Naive thymus-derived CD4-positive, alpha-beta T cell (primary cell): ENCODE measurements at regions of chr12 and their contacts with region 1.

Region 1: GRCh38 chr12:44812062-44812461 is 64.1 kb downstream of the NELL2 start:
- DNase-seq: peak in 7 of 9 donors; percentile 42 to 65 (median 60)
- ATAC-seq: peak; percentile 79
- H3K4me3 ChIP-seq: no peak overlapping the region
- H3K4me3 Mint-ChIP-seq: peak overlapping the region in 3 of 10 donors; percentile 14 to 38 (median 34)
- H3K27ac ChIP-seq: no peak overlapping the region
- H3K27ac Mint-ChIP-seq: peak overlapping the region in 6 of 9 donors; percentile 21 to 77 (median 41)
- H3K4me1 ChIP-seq: peaks cover 14 to 15% of the 10 kb centered on the region in 2 donors
- H3K4me1 Mint-ChIP-seq: peaks cover 8 to 50% (median 38%) of the 10 kb centered on the region in 7 donors
- H3K27me3 ChIP-seq: no peaks in the 10 kb centered on the region
- H3K27me3 Mint-ChIP-seq: no peaks in the 10 kb centered on the region

Region 2: DNA sequence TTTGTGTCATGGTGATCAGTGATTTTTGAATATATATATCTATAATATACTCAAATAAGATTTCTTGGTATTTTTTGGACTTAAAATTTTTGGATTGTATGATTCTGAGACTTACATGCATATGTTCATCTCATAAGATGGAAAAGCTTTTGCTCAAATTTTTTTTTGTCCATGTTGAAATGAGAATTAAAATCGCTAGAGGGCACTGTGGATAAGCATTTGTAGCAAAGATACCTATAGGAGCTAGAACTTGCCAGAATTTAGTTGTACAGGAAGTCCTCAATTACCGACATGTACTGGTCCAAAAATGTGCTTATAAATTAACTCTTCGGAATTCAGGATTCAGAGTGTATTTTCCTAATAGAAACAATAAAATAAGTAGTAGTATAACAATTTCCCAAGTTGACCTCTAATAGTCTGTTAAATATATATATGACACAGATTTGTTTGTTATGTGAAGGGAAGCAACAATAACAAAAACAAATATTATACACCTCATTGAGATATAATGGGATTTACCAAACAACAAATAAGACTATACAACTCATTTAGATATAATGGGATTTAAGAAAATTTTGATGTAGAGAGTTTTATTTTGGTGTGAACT is 796.6 kb before region 1 on chr12:
- CTCF ChIA-PET with region 1: interaction called, 4 read pairs
- POLR2A ChIA-PET with region 1: no interaction called
- intact Hi-C with region 1: loop called in 1 of 2 experiments (anchors 5 kb)
- DNase-seq: peak in 7 of 9 donors; percentile 14 to 56 (median 40)
- ATAC-seq: peak; percentile 53
- H3K4me3 ChIP-seq: no peak overlapping the region
- H3K4me3 Mint-ChIP-seq: no peak overlapping the region
- H3K27ac ChIP-seq: no peak overlapping the region
- H3K27ac Mint-ChIP-seq: no peak overlapping the region
- H3K4me1 ChIP-seq: no peaks in the 10 kb centered on the region
- H3K4me1 Mint-ChIP-seq: peaks cover 0 to 3% (median 0%) of the 10 kb centered on the region in 7 donors
- H3K27me3 ChIP-seq: no peaks in the 10 kb centered on the region
- H3K27me3 Mint-ChIP-seq: peaks cover 0 to 3% (median 0%) of the 10 kb centered on the region in 5 donors

Region 3: GRCh38 chr12:44647917-44648690 is 164.0 kb before region 1 on chr12:
- CTCF ChIA-PET with region 1: no interaction called
- POLR2A ChIA-PET with region 1: no interaction called
- intact Hi-C with region 1: no loop called
- DNase-seq: no peak
- ATAC-seq: no peak
- H3K4me3 ChIP-seq: no peak overlapping the region
- H3K4me3 Mint-ChIP-seq: no peak overlapping the region
- H3K27ac ChIP-seq: no peak overlapping the region
- H3K27ac Mint-ChIP-seq: peak overlapping the region in 1 of 9 donors; percentile 1
- H3K4me1 ChIP-seq: no peaks in the 10 kb centered on the region
- H3K4me1 Mint-ChIP-seq: peaks cover 0 to 23% (median 9%) of the 10 kb centered on the region in 7 donors
- H3K27me3 ChIP-seq: no peaks in the 10 kb centered on the region
- H3K27me3 Mint-ChIP-seq: no peaks in the 10 kb centered on the region

Region 4: DNA sequence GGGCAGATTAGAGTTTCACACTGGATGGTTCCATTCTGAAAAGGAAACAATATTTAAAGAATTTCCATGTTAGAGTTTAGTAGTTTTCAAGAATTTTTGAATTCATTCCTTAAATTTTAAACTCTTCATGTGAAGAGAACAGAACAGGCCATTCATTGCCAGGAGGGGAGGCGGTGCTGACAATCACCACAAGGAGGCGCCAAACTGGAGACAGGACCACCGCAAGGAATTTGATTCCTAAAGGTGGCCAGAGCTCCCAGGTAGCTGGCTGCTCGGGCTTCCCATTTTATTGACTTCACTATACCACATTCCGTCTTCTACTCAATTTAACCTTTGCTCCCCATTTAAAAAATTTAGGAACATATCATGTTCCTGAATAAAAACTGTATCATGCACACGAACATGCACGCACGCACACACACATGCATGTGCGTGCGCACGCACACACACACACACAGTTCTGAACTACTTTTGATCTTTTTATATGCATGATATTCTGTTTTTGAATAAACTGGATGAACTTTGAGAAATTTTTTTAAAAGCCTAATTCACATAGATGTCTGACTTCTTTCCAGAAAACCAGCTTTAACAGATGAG is 37.1 kb before region 1 on chr12:
- CTCF ChIA-PET with region 1: interaction called, 22 read pairs
- POLR2A ChIA-PET with region 1: no interaction called
- intact Hi-C with region 1: loop called (anchors 1 to 5 kb)
- DNase-seq: peak; percentile 12 to 61 (median 47)
- ATAC-seq: peak; percentile 57
- H3K4me3 ChIP-seq: no peak overlapping the region
- H3K4me3 Mint-ChIP-seq: peak overlapping the region in 1 of 10 donors; percentile 64
- H3K27ac ChIP-seq: no peak overlapping the region
- H3K27ac Mint-ChIP-seq: peak overlapping the region in 2 of 9 donors; percentile 54 to 85
- H3K4me1 ChIP-seq: no peaks in the 10 kb centered on the region
- H3K4me1 Mint-ChIP-seq: peaks cover 0 to 9% (median 4%) of the 10 kb centered on the region in 7 donors
- H3K27me3 ChIP-seq: no peaks in the 10 kb centered on the region
- H3K27me3 Mint-ChIP-seq: peaks cover 0 to 3% (median 0%) of the 10 kb centered on the region in 5 donors

Region 5: GRCh38 chr12:44827832-44828438 is 15.9 kb after region 1 on chr12:
- CTCF ChIA-PET with region 1: interaction called, 8 read pairs
- POLR2A ChIA-PET with region 1: interaction called, 7 read pairs
- intact Hi-C with region 1: loop called (anchors 1 kb)
- DNase-seq: peak in 7 of 9 donors; percentile 44 to 82 (median 72)
- ATAC-seq: peak; percentile 92
- H3K4me3 ChIP-seq: peak overlapping the region; percentile 31
- H3K4me3 Mint-ChIP-seq: peak overlapping the region; percentile 56 to 81 (median 76)
- H3K27ac ChIP-seq: peak overlapping the region; percentile 74
- H3K27ac Mint-ChIP-seq: peak overlapping the region; percentile 84 to 99 (median 92)
- H3K4me1 ChIP-seq: peaks cover 28 to 36% of the 10 kb centered on the region in 2 donors
- H3K4me1 Mint-ChIP-seq: peaks cover 13 to 85% (median 66%) of the 10 kb centered on the region in 7 donors
- H3K27me3 ChIP-seq: no peaks in the 10 kb centered on the region
- H3K27me3 Mint-ChIP-seq: no peaks in the 10 kb centered on the region

Region 6: DNA sequence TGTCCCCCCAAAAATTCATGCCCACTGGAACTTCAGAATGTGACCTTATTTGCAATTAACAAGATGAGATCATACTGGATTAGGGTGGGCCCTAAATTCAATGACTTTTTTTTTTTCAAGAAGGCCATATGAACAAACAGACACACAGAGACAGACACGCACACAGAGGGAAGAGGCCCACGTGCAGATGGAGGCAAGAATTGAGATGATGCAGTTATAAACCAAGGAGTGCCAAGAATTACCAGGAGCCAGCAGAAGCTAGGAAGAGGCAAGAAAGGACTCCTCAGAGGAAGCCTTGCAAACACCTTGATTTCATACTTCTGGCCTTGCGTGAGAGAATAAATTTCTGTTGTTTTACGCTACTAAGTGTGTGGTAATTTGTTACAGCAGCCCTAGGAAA is 30.6 kb after region 1 on chr12:
- CTCF ChIA-PET with region 1: interaction called, 7 read pairs
- POLR2A ChIA-PET with region 1: interaction called, 10 read pairs
- intact Hi-C with region 1: no loop called
- DNase-seq: no peak
- ATAC-seq: peak; percentile 41
- H3K4me3 ChIP-seq: peak overlapping the region; percentile 4
- H3K4me3 Mint-ChIP-seq: peak overlapping the region; percentile 17 to 86 (median 60)
- H3K27ac ChIP-seq: peak overlapping the region; percentile 33
- H3K27ac Mint-ChIP-seq: peak overlapping the region; percentile 65 to 98 (median 89)
- H3K4me1 ChIP-seq: peaks cover 46 to 57% of the 10 kb centered on the region in 2 donors
- H3K4me1 Mint-ChIP-seq: peaks cover 27 to 96% (median 80%) of the 10 kb centered on the region in 7 donors
- H3K27me3 ChIP-seq: no peaks in the 10 kb centered on the region
- H3K27me3 Mint-ChIP-seq: no peaks in the 10 kb centered on the region